Calu3 (cell line): ENCODE measurements at regions of chr2 and their contacts with region 1.

Region 1: DNA sequence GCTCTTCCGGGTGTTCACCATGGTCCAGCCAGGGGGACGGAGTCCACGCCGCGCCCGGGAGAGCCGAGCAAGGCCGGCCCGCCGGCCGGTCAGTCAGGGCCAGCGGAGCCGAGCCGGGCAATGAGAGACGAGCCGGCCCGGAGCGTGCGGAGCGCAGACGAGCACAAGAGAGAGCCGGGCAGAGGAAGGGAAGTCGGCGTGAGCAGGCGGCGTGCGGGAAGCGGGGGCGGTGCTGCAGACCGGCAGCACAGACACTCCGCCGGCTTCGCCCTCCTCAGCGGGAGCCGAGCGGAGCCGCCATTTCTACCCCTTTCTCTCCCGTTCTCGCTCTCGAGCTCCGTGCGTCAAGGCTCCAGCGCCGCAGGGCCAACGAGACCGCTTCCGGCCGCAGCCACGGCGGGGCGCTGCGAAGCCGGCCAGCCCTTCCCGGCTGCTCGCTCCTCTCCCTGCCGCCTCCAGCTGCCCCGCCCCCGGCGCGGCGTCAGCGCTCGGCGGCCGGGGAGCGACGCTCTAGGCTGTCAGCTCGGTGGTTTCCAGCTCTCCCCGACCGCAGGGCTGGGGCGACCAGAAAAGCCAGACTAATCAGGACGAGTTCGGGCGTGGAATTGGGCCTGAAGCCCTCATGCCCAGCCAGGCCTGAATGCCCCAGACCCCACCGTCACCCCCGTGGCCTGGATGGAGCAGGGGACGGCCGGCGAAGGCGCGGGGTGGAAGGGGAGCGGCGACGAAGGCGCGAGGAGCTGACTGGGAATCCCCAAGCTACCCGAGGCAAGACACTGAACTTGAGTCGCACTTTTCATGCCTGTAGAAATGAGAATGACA is at the start of gene ATAD2B:
- DNase-seq: peak; percentile 98
- H3K4me3 Mint-ChIP-seq: peak within 1 kb of the TSS; percentile 99
- H3K27ac Mint-ChIP-seq: peak within 1 kb of the TSS; percentile 94
- H3K4me1 Mint-ChIP-seq: peaks cover 44% of the 10 kb centered on the region
- H3K27me3 Mint-ChIP-seq: no peaks in the 10 kb centered on the region
- CTCF ChIP-seq: peak; percentile 80
- total RNA-seq, gene ATAD2B: 17.9 and 19.7 TPM in 2 replicates

Region 2: DNA sequence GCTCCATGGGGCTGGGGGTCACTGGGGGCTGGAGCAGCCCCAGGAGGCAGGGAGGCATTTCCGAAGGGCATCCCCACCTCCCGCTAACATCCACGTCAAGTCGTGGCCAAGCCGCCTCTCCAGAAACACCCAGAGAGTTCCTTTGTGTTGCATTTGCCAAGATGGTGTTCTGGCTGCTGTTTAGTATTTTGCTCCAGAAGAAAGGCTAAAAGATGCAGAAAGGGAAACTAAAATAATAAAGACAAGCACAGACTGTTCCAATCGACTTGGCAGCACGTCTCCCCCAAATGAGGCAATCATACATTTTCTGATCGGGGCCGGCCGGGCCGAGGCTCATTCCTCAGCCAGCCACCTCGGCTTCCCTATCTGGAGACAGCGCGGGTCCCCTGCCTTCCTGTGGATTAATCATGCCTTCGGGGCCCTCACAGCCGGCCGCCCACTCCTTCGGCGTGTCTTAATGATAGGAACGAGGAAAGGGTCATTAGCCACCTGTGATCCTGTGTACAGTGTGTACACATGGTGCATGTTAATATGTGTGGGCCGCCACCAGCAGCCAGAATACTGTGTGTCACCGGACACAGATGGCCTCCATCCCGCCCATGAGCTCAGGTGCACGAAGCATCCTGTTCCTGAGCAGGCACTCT is 372.8 kb before region 1 on chr2:
- CTCF ChIA-PET with region 1: no interaction called
- intact Hi-C with region 1: no loop called
- DNase-seq: no peak
- H3K4me3 Mint-ChIP-seq: no peak overlapping the region
- H3K27ac Mint-ChIP-seq: no peak overlapping the region
- H3K4me1 Mint-ChIP-seq: peaks cover 10% of the 10 kb centered on the region
- H3K27me3 Mint-ChIP-seq: no peaks in the 10 kb centered on the region
- CTCF ChIP-seq: no peak

Region 3: DNA sequence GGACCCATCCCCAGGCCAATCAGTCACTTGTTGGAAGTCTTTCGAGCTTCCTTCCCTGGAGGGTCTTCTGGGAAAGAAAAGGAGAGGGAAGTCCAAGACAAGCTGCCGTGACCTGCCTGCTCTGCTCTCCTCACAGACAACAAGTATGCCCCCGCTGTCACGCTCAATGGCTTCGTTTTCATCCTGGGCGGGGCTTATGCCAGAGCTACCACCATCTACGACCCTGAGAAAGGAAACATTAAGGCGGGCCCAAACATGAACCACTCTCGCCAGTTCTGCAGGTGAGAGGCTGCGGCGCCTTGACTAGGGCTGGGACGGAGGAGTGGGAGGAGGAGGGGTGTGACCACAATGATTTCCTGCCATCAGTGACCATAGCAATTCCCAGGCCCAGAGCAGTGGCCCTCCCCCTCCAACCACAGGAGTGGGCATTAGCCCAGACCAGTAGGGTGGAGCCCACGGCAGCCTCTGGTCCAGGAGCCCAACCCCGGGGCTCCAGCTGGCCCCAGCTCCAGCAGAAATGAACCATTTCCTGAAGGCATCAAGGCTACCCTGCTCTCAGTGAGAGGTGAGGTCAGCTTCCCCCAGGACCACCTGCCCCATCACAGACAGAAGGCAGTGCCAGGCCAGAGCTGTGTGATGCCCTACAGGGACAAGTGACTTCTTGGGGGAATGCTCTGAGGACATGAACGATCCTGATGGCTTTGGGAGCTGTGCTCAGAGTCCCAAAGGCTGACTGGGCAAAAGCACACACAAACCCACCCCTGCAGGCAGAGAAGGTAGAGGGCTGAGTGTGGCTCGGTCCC is 223.2 kb before region 1 on chr2:
- CTCF ChIA-PET with region 1: no interaction called
- intact Hi-C with region 1: no loop called
- DNase-seq: no peak
- H3K4me3 Mint-ChIP-seq: no peak overlapping the region
- H3K27ac Mint-ChIP-seq: no peak overlapping the region
- H3K4me1 Mint-ChIP-seq: no peaks in the 10 kb centered on the region
- H3K27me3 Mint-ChIP-seq: no peaks in the 10 kb centered on the region
- CTCF ChIP-seq: no peak

Region 4: DNA sequence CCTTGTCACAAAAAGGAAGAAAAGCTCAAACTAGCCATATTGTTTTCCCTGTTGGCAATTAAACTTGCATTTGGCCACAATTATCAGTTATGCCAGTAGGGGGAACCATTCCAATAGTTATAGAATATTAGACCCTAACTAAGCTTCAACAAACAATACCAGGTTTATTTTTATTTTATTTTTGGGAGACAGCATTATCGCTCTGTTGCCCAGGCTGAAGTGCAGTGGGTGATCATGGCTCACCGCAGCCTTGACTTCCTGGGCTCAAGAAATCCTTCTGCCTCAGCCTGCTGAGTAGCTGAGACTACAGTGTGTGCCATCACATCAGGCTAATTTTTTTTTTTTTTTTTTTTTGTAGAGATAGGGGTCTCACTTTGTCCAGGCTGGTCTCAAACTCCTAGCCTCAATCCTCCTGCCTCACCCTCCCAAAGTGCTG is 102.2 kb before region 1 on chr2:
- CTCF ChIA-PET with region 1: interaction called, 12 read pairs
- intact Hi-C with region 1: no loop called
- DNase-seq: peak; percentile 54
- H3K4me3 Mint-ChIP-seq: no peak overlapping the region
- H3K27ac Mint-ChIP-seq: no peak overlapping the region
- H3K4me1 Mint-ChIP-seq: no peaks in the 10 kb centered on the region
- H3K27me3 Mint-ChIP-seq: no peaks in the 10 kb centered on the region
- CTCF ChIP-seq: peak; percentile 30

Region 5: GRCh38 chr2:23835988-23836387 is 91.0 kb before region 1 on chr2:
- CTCF ChIA-PET with region 1: no interaction called
- intact Hi-C with region 1: no loop called
- DNase-seq: no peak
- H3K4me3 Mint-ChIP-seq: no peak overlapping the region
- H3K27ac Mint-ChIP-seq: no peak overlapping the region
- H3K4me1 Mint-ChIP-seq: no peaks in the 10 kb centered on the region
- H3K27me3 Mint-ChIP-seq: no peaks in the 10 kb centered on the region
- CTCF ChIP-seq: no peak

Region 6: GRCh38 chr2:23939987-23940717 is 13.2 kb after region 1 on chr2 and contains the start of gene UBXN2A:
- CTCF ChIA-PET with region 1: interaction called, 14 read pairs
- intact Hi-C with region 1: no loop called
- DNase-seq: peak; percentile 82
- H3K4me3 Mint-ChIP-seq: peak within 1 kb of the TSS; percentile 75
- H3K27ac Mint-ChIP-seq: peak within 1 kb of the TSS; percentile 51
- H3K4me1 Mint-ChIP-seq: peaks cover 40% of the 10 kb centered on the region
- H3K27me3 Mint-ChIP-seq: peaks cover 8% of the 10 kb centered on the region
- CTCF ChIP-seq: no peak
- total RNA-seq, gene UBXN2A: 12.8 and 15.1 TPM in 2 replicates

Region 7: DNA sequence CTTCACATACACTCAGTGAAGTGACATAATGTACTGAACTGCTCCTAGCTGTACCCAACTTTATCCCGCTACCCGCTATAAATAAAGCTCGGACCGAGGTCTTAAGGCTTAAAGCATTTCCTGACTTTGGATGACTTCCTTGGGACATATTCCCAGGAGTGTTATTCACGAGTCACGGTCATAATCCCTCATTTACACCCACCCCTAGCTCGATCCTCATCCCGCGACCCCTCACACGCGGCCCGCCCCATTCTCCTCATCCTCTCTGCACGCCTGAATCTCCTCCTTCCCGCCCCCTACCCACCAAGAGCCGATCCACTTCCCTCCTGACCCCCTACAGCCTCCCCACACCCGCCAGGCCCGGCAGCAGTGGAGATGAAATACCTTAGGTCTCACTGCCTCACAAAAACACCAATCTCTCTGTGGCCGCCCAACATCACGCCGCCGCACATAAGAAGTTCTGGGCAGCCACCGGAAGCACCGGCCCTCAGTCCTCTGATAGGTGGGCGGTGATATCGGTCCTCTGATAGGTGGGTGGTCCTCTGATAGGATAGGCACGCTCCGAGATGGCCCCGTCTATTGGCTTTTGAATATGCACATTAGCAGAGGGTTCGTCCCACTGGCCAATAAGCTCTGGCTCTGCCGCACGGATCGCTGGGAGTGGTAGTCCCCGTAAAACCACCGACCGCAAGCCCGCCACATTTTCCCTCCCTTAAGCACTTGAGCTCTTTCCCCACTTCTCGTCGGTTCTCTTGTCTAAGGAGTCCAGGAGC is 120.2 kb after region 1 on chr2 and contains the start of gene WDCP:
- CTCF ChIA-PET with region 1: interaction called, 11 read pairs
- intact Hi-C with region 1: no loop called
- DNase-seq: peak; percentile 94
- H3K4me3 Mint-ChIP-seq: peak within 1 kb of the TSS; percentile 88
- H3K27ac Mint-ChIP-seq: peak within 1 kb of the TSS; percentile 50
- H3K4me1 Mint-ChIP-seq: peaks cover 9% of the 10 kb centered on the region
- H3K27me3 Mint-ChIP-seq: no peaks in the 10 kb centered on the region
- CTCF ChIP-seq: no peak
- total RNA-seq, gene WDCP: 13.4 and 17.2 TPM in 2 replicates

Region 8: GRCh38 chr2:24075915-24076848 is 149.2 kb after region 1 on chr2 and contains the start of gene SF3B6:
- CTCF ChIA-PET with region 1: interaction called, 6 read pairs
- intact Hi-C with region 1: loop called (anchors 5 kb)
- DNase-seq: peak; percentile 100
- H3K4me3 Mint-ChIP-seq: peak within 1 kb of the TSS; percentile 79
- H3K27ac Mint-ChIP-seq: peak within 1 kb of the TSS; percentile 80
- H3K4me1 Mint-ChIP-seq: peaks cover 15% of the 10 kb centered on the region
- H3K27me3 Mint-ChIP-seq: no peaks in the 10 kb centered on the region
- CTCF ChIP-seq: no peak
- total RNA-seq, gene SF3B6: 112 and 125 TPM in 2 replicates

Region 9: DNA sequence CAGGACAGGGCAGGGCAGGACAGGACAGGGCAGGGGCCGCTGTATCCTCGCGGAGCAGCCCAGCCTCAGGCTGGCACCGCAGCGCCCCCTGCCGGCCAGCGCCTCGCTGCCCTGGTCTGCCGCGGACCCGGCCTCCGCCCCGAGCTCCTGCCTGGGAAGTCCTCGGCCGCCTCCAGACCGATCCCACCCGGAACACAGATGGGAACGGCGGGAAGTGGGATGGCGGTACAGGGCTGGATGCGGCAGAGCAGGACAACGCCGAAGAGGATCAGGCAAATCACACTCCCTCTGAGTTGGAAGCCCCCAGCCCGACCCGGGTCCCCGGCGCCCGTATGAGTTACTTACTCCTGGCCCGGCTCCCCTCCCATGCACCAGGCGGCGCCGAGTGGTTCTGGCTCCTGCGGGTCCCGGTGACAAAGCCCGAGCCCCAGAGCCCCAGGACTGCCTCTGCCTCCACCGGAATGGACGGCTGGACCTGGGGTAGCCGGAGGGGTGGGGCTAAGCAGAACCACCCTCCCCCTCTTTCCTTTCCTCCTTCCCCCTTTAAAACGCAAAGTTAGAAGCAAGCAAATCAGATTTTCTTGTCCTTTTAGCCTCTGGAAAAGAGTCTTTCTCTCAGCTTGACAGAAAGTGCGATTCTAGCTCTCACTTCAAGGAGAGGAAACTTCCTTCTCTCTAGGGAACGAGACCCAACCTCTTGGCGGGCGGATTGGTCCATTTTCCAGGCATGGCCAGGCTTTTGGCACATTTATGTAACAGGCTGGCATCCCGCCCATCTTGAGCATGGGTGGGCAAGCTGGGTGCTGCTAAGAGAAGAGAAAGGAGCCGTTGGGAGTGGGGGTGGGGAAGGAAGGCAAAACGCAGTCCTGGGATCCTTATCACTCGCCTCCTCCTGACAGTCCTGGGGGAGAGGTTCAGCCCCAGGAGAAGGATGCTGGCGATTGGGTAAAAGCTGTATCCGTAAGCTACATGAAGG is 157.7 kb after region 1 on chr2 and contains the start of gene TP53I3:
- CTCF ChIA-PET with region 1: interaction called, 15 read pairs
- intact Hi-C with region 1: loop called (anchors 5 kb)
- DNase-seq: peak; percentile 97
- H3K4me3 Mint-ChIP-seq: peak within 1 kb of the TSS; percentile 86
- H3K27ac Mint-ChIP-seq: peak within 1 kb of the TSS; percentile 80
- H3K4me1 Mint-ChIP-seq: peaks cover 10% of the 10 kb centered on the region
- H3K27me3 Mint-ChIP-seq: no peaks in the 10 kb centered on the region
- CTCF ChIP-seq: peak; percentile 98
- total RNA-seq, gene TP53I3: 13.9 TPM in 2 replicates